ENCODE measurements at regions of chr3 and their contacts with region 1.

Region 1: GRCh38 chr3:31550452-31551251 is 17.9 kb downstream of the STT3B start:
- DNase-seq: peak; percentile 20
- ATAC-seq: peak; percentile 67
- H3K4me3 ChIP-seq: no peak overlapping the region
- H3K27ac ChIP-seq: no peak overlapping the region
- H3K4me1 ChIP-seq: no peaks in the 10 kb centered on the region
- H3K27me3 ChIP-seq: no peaks in the 10 kb centered on the region
- CTCF ChIP-seq: peak; percentile 60
- EP300 ChIP-seq: no peak
- POLR2A ChIP-seq: no peak
- RAD21 ChIP-seq: no peak

Region 2: DNA sequence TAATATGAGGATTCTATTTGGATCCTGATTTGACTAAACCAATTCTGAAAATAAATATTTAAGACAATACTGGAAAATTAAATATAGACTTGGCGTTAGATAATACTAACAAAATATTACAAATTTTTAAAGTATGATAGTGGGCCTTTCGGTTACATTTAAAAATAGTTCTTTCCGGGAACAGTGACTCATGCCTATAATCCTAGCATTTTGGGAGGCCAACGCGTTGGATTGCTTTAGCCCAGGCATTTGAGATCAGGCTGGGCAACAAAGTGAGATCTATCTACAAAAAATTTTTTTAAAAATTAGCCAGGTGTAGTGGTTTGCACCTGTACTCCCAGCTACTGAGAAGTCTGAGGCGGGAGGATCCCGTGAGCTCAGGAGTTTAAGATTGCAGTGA is 625.9 kb before region 1 on chr3:
- CTCF ChIA-PET with region 1: no interaction called
- POLR2A ChIA-PET with region 1: no interaction called
- in situ Hi-C with region 1: no loop called
- intact Hi-C with region 1: no loop called
- DNase-seq: no peak
- ATAC-seq: no peak
- H3K4me3 ChIP-seq: no peak overlapping the region
- H3K27ac ChIP-seq: no peak overlapping the region
- H3K4me1 ChIP-seq: no peaks in the 10 kb centered on the region
- H3K27me3 ChIP-seq: peaks cover 0 to 8% of the 10 kb centered on the region in 2 experiments; a peak in 2 of 5 replicates
- CTCF ChIP-seq: no peak
- EP300 ChIP-seq: no peak
- POLR2A ChIP-seq: no peak
- RAD21 ChIP-seq: no peak

Region 3: DNA sequence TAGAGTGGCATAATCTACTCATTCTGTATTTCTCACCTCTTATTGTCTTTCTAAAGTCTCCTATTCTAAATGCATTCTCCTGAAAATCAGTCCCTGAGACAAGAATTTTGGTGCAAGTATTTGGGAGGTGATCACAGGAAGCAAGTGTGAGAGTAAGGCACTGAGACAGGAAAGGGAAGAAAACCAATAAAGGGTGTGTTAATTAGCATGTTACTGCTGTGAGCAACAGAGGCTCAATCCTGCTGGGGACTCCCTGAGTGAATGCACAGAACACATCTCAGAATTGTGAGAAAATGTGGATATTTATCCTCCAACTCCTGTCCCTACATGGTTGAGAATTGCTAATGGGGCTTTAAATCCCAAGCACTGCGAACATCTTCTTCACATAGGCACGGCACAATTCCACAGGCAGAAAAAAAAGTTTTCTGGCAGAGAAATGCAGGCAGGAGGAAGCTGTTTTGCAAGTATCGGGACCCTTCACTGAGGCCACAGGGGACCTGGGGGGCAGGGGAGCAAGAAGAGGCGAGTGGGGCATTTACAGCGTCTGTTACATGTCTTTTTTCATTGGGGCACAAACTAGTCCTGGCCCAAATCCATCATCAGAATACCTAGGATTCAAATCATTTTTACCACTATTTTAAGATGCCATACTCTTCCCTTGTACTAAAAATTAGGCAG is 45.1 kb before region 1 on chr3:
- CTCF ChIA-PET with region 1: no interaction called
- POLR2A ChIA-PET with region 1: no interaction called
- in situ Hi-C with region 1: no loop called
- intact Hi-C with region 1: no loop called
- DNase-seq: no peak
- ATAC-seq: no peak
- H3K4me3 ChIP-seq: no peak overlapping the region
- H3K27ac ChIP-seq: no peak overlapping the region
- H3K4me1 ChIP-seq: peaks cover 8% of the 10 kb centered on the region
- H3K27me3 ChIP-seq: peaks cover 0 to 19% of the 10 kb centered on the region in 2 experiments; a peak in 3 of 5 replicates
- CTCF ChIP-seq: no peak
- EP300 ChIP-seq: no peak
- POLR2A ChIP-seq: no peak
- RAD21 ChIP-seq: no peak

Region 4: DNA sequence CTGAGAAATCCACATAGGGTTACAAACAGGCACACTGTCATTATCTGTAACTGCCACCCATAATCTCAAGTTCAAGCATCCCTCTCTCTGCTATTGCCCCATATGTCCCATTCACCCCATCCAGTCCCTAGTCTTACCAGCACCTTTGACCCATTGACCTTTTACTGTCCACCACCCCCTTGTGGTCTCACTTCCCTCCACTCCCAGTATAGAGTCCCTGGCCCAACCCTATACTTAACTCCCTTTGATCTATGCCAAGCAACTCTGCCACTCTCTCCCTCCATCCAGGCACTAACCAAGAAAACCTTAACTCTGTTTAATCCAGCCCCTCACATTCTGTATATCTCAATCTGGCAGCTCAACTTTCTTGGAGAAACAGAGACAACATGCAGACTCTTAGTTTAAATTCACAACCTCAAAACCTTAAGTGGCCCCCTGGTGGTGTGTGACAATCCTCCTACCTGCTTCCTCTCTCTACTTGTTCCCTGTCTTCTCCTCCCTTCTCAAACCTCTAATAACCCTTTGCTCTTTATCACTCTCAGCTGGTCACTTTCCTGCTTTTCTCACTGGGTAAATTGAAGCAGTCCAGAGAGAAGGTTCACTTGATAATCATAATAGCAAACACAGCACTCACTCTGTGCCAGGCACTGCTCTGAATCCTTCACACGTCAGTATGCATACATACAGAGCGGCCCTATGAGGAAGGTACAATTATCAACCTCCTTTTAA is 144.8 kb after region 1 on chr3:
- CTCF ChIA-PET with region 1: no interaction called
- POLR2A ChIA-PET with region 1: no interaction called
- in situ Hi-C with region 1: no loop called
- intact Hi-C with region 1: loop called (anchors 5 kb)
- DNase-seq: no peak
- ATAC-seq: peak; percentile 75
- H3K4me3 ChIP-seq: no peak overlapping the region
- H3K27ac ChIP-seq: no peak overlapping the region
- H3K4me1 ChIP-seq: no peaks in the 10 kb centered on the region
- H3K27me3 ChIP-seq: no peaks in the 10 kb centered on the region
- CTCF ChIP-seq: 0 out of 2 replicates have a peak, but pooled peaks have one; percentile 6
- EP300 ChIP-seq: no peak
- POLR2A ChIP-seq: no peak
- RAD21 ChIP-seq: no peak